BJ (cell line): ENCODE measurements at regions of chr7 and their contacts with region 1.

Region 1: GRCh38 chr7:148729984-148730733 is 31.5 kb downstream of the CUL1 start:
- DNase-seq: no peak
- H3K4me3 ChIP-seq: no peak overlapping the region
- H3K27me3 ChIP-seq: no peaks in the 10 kb centered on the region
- CTCF ChIP-seq: no peak

Region 2: DNA sequence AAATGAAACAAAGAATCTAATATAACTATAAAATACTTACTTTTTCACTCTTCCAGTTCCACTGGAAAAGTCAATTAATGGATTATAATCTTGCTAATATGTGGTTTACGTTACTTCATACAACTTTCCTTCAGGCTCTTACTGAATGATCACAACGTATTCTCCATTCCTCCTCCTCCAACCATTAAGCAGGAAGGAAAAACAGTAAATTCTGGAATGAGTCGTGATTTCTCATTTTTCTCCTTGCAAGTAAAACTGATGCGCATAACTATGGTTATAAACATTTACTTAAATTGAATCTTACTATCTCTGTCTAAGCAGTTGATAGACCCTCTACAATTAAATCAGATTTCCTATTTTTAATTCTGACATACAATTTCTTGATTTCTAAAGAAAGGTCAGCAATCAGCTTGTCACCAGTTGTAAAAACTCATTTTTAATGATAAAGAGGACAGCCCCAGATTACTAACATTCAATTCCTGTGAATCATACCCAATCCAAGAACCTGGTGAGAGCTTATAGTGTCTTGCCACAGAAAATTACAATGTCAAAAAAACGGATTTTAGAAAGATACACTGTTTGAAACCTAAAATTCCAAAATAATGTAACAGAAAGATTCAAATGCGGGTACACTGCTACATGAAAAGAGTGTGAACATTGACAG is 89.7 kb after region 1 on chr7:
- CTCF ChIA-PET with region 1: no interaction called
- POLR2A ChIA-PET with region 1: interaction called, 11 read pairs
- DNase-seq: peak; percentile 9
- H3K4me3 ChIP-seq: no peak overlapping the region
- H3K27me3 ChIP-seq: no peaks in the 10 kb centered on the region
- CTCF ChIP-seq: no peak

Region 3: GRCh38 chr7:149005241-149006050 is 275.3 kb after region 1 on chr7:
- CTCF ChIA-PET with region 1: no interaction called
- POLR2A ChIA-PET with region 1: no interaction called
- DNase-seq: no peak
- H3K4me3 ChIP-seq: no peak overlapping the region
- H3K27me3 ChIP-seq: no peaks in the 10 kb centered on the region
- CTCF ChIP-seq: peak; percentile 85